Dendritic cell treated with granulocyte-macrophage colony-stimulating factor and Interleukin-4, amounts not matched to agents 40 ng/mL and 50 ng/mL, for 4 days (primary cell): ENCODE measurements at regions of chr19 and their contacts with region 1.

Region 1: GRCh38 chr19:6021878-6022569 is 44.1 kb upstream of the RANBP3 start:
- H3K4me3 Mint-ChIP-seq: no peak overlapping the region
- H3K27ac Mint-ChIP-seq: no peak overlapping the region
- H3K4me1 Mint-ChIP-seq: no peaks in the 10 kb centered on the region
- H3K27me3 Mint-ChIP-seq: peaks cover 4% of the 10 kb centered on the region

Region 2: GRCh38 chr19:5803752-5804515 is 218.1 kb before region 1 on chr19:
- intact Hi-C with region 1: loop called (anchors 2 kb)
- H3K4me3 Mint-ChIP-seq: peak overlapping the region; percentile 78
- H3K27ac Mint-ChIP-seq: peak overlapping the region; percentile 55
- H3K4me1 Mint-ChIP-seq: peaks cover 24% of the 10 kb centered on the region
- H3K27me3 Mint-ChIP-seq: peaks cover 85% of the 10 kb centered on the region

Region 3: DNA sequence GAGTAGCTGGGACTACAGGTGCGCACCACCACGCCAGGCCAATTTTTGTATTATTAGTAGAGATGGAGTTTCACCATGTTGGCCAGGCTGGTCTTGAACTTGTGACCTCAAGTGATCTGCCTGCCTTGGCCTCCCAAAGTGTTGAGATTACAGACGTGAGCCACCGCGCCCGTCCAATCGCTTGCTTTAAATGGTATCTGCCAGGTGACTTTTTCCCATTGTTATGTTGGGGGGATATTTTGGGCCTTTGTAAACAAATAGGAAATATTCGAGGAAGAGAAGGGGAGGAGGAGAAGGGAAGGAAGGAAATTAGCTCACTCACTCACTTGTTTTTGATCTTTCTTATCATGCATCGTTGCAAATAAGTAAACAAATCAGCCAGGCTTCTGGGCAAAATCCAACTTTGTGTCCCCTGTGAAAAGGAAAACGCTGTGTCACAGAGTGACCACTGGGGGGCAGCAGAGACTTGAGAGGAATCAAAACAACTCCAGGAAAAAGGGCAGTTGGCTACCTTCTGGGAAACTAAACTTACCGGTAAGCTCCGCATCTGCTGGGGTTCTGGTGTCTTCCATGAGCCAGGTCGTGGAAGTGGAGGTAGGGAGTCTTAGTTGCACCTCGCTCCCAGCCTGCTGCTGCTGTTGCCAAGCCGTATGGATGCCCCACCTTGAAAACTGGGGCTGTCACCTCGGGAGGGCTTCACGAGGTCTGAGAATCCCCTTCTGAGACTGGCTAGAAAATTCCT is 34.8 kb before region 1 on chr19:
- intact Hi-C with region 1: loop called (anchors 2 kb)
- H3K4me3 Mint-ChIP-seq: peak overlapping the region; percentile 75
- H3K27ac Mint-ChIP-seq: peak overlapping the region; percentile 68
- H3K4me1 Mint-ChIP-seq: peaks cover 31% of the 10 kb centered on the region
- H3K27me3 Mint-ChIP-seq: no peaks in the 10 kb centered on the region

Region 4: DNA sequence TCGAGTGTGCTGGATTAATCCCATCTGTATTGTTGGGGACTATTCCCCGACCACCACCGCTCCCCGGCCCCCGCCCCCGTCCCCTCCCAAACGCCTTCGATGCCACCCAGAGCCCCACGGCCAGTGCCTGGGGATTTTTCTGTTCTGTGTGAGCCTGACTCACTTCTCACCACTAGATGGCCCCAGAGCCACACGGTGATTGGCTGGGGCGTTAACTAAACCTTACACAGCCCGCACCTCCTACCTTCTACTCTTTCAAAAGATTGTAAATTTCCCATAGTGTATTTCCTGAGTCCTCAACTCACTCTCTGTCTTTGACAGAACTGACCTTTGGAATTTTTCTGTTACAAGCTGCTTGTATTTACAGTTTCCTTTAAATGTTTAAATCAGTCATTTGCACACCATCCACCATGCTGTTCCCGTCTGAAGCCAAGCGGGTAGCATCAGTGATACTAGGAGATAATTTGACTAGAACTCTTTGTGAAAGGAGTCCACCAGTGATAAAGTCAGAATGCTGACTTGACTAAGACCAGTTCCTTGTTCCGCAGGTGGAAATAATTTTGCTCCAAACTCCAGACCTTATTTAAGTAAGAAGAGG is 26.9 kb after region 1 on chr19:
- intact Hi-C with region 1: no loop called
- H3K4me3 Mint-ChIP-seq: no peak overlapping the region
- H3K27ac Mint-ChIP-seq: no peak overlapping the region
- H3K4me1 Mint-ChIP-seq: peaks cover 5% of the 10 kb centered on the region
- H3K27me3 Mint-ChIP-seq: no peaks in the 10 kb centered on the region